ENCODE measurements at regions of chr3 and their contacts with region 1.

Region 1: DNA sequence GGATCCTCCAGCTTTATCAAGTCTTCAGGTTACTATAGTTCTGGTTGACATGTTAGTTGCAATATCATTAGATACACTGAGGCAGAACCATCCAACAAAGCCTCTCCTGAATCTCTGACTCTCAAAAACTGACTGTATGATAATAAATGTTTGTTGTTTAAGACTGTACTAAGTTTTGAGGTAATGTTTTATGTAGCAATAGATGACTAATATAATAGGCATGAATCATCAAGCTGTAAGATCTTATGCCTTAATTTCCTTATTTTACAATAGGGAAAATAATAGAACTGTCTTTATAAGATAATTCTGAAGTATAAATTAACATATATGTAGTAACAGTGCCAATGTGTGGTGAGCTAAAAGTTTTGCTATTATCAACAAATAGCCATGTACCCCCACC is 88.9 kb upstream of the TBC1D5 start:
- DNase-seq: no peak
- ATAC-seq: no peak
- H3K4me3 ChIP-seq: no peak overlapping the region
- H3K27ac ChIP-seq: no peak overlapping the region
- H3K4me1 ChIP-seq: no peaks in the 10 kb centered on the region
- H3K27me3 ChIP-seq: no peaks in the 10 kb centered on the region
- CTCF ChIP-seq: no peak

Region 2: GRCh38 chr3:17431004-17431403 is 400.4 kb before region 1 on chr3:
- intact Hi-C with region 1: loop called in 1 of 2 experiments (anchors 10 kb)
- DNase-seq: peak in 1 of 4 donors; percentile 33
- ATAC-seq: peak; percentile 71
- H3K4me3 ChIP-seq: no peak overlapping the region
- H3K27ac ChIP-seq: no peak overlapping the region
- H3K4me1 ChIP-seq: no peaks in the 10 kb centered on the region
- H3K27me3 ChIP-seq: no peaks in the 10 kb centered on the region
- CTCF ChIP-seq: peak in 1 of 2 donors; percentile 37

Region 3: DNA sequence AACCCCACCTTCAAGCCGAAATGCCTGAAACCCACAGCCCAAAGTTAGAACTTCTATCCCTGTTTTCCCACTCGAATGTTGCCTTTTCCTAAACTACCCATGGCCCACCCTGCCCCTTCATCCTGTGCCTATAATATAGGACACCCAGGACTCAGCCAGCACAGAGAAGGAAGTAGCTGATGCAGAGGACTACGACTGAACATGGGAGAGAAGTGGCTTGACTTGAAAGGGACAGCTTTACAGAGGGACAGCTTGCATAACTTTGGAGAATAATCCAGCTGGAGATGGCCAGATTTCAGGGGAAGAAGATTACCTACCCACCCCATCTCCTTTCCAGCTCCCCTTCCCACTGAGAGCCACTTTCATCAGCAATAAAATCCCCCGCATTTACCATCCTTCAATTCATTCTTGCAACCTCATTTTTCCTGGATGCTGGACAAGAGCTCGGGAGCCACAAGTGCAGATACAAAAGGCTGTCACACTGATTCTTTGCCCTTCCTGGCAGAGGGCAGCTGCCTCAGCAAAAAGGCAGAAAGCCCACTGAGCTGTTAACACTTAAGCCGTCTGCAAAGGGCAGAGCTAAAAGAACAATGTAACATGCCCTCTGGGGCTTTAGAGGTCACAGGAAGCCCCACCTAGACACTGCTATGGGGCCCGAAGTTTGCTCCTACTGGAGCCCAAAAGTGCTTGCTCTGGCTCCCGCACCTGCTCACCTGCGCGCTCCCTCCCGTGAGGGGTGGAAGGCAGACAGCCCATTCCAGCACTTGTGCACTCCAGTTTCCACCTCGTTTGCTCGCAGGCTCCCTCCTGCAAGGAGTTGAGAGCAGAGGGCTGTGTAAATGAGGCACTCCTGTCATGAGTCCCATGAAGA is 312.9 kb before region 1 on chr3:
- intact Hi-C with region 1: no loop called
- DNase-seq: peak in 3 of 4 donors; percentile 13 to 62 (median 35)
- ATAC-seq: peak; percentile 93
- H3K4me3 ChIP-seq: no peak overlapping the region
- H3K27ac ChIP-seq: no peak overlapping the region
- H3K4me1 ChIP-seq: peaks cover 0 to 6% of the 10 kb centered on the region in 2 donors
- H3K27me3 ChIP-seq: no peaks in the 10 kb centered on the region
- CTCF ChIP-seq: no peak

Region 4: DNA sequence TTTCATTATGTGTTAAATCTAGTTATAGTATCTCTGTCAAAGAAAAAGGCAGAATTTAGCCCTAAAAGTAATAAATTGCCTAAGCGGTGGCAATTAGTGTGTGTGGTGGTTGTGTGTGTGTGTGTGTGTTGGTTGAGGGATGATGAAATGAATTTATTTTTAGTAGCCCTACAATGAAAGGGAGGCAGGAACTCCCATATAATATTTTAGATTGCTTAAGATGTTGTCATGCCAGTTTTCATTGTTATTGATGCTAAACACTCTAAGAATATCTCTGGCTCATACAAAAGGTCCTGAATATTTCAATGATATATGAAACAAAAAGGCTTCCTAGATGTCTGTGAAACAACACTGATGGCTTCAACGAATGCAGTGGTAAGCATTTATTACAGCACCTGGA is 51.6 kb after region 1 on chr3:
- intact Hi-C with region 1: no loop called
- DNase-seq: no peak
- ATAC-seq: no peak
- H3K4me3 ChIP-seq: no peak overlapping the region
- H3K27ac ChIP-seq: no peak overlapping the region
- H3K4me1 ChIP-seq: no peaks in the 10 kb centered on the region
- H3K27me3 ChIP-seq: no peaks in the 10 kb centered on the region
- CTCF ChIP-seq: no peak

Measured in left lung (tissue), 14 donors.